ENCODE measurements at regions of chr7 and their contacts with region 1.

Region 1: DNA sequence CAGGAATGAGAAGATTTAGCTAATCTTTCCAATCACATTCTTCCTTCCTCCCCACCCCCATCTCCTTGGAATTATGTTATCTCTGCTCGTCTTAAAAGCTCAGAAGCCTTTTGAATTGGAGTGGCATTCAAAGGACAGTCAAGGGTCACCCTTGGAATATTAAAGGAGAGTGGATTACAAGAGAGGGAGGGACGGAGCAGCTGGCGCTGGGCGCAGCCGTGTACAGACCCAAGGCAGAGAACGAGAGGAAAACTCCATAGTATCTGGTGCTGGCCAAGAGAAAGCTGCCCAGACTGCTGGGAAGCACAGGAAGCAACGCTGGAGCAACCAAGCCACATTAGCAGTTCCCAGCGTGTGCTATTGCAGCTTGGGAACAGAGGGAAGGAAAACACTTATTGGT is 95.7 kb downstream of the POU6F2 start:
- DNase-seq: peak in 2 of 3 donors; percentile 31 to 59
- ATAC-seq: peak; percentile 76
- H3K4me3 ChIP-seq: no peak overlapping the region
- H3K27ac ChIP-seq: no peak overlapping the region
- H3K4me1 ChIP-seq: no peaks in the 10 kb centered on the region
- H3K27me3 ChIP-seq: no peaks in the 10 kb centered on the region

Region 2: GRCh38 chr7:39465055-39465929 is 391.9 kb after region 1 on chr7:
- intact Hi-C with region 1: loop called in 2 of 4 experiments (anchors 10 kb)
- DNase-seq: peak in 1 of 3 donors; percentile 15
- ATAC-seq: peak; percentile 68 to 76
- H3K4me3 ChIP-seq: no peak overlapping the region
- H3K27ac ChIP-seq: no peak overlapping the region
- H3K4me1 ChIP-seq: no peaks in the 10 kb centered on the region
- H3K27me3 ChIP-seq: no peaks in the 10 kb centered on the region

Region 3: DNA sequence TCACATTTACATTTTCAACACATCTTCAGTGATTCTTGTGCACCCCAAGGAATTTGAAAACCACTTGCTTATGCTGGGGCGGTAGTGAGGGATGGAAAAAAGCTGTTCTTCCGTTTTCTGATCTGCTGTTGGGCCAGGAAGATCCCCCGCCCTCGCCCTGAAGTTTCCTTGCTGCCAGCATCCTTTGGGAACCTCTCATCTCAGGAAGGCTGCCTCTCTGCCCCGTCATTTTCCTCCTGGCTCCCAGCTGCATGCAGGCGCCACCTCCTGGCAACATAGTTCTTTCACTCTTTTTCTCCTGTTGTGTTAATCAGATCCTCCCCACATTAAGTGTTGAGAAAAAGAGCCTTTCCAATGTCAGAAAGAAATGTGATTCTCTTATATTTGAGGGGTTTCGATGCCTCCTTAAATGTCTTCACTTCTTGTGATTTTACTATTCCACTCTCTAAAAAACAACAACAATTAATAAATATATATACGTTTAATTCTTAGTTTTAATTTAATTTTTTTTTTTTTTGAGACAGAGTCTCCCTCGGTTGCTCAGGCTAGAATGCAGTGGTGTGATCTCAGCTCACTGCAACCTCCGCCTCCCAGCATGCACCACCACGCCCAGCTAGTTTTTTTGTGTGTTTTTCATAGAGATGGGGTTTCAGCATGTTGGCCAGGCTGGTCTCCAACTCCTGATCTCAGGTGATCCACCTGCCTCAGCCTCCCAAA is 672.8 kb after region 1 on chr7:
- intact Hi-C with region 1: no loop called
- DNase-seq: peak; percentile 78 to 87 (median 82)
- ATAC-seq: peak; percentile 75 to 88
- H3K4me3 ChIP-seq: no peak overlapping the region
- H3K27ac ChIP-seq: no peak overlapping the region
- H3K4me1 ChIP-seq: no peaks in the 10 kb centered on the region
- H3K27me3 ChIP-seq: no peaks in the 10 kb centered on the region